Activated T-helper 2 cell treated with anti-CD3 and anti-CD28 coated beads, Interferon-gamma antibody, Interleukin-2, Interleukin-4, amounts not matched to agents 10 μg/mL and 5 μg/mL and 100 μg/mL, durations not matched to agents 14 hours and 24 hours and 36 hours (primary cell): ENCODE measurements at regions of chr6 and their contacts with region 1.

Region 1: GRCh38 chr6:26322645-26323482 is 42.1 kb upstream of the BTN3A2 start:
- DNase-seq: peak; percentile 60
- H3K4me3 Mint-ChIP-seq: peak overlapping the region; percentile 86
- H3K27ac Mint-ChIP-seq: peak overlapping the region; percentile 91
- H3K4me1 Mint-ChIP-seq: peaks cover 45% of the 10 kb centered on the region
- H3K27me3 Mint-ChIP-seq: peaks cover 3% of the 10 kb centered on the region

Region 2: DNA sequence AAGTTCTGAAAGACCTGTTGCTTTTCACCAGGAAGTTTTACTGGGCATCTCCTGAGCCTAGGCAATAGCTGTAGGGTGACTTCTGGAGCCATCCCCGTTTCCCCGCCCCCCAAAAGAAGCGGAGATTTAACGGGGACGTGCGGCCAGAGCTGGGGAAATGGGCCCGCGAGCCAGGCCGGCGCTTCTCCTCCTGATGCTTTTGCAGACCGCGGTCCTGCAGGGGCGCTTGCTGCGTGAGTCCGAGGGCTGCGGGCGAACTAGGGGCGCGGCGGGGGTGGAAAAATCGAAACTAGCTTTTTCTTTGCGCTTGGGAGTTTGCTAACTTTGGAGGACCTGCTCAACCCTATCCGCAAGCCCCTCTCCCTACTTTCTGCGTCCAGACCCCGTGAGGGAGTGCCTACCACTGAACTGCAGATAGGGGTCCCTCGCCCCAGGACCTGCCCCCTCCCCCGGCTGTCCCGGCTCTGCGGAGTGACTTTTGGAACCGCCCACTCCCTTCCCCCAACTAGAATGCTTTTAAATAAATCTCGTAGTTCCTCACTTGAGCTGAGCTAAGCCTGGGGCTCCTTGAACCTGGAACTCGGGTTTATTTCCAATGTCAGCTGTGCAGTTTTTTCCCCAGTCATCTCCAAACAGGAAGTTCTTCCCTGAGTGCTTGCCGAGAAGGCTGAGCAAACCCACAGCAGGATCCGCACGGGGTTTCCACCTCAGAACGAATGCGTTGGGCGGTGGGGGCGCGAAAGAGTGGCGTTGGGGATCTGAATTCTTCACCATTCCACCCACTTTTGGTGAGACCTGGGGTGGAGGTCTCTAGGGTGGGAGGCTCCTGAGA is 235.4 kb before region 1 on chr6 and contains the start of gene HFE:
- intact Hi-C with region 1: no loop called
- DNase-seq: peak; percentile 20
- H3K4me3 Mint-ChIP-seq: peak within 1 kb of the TSS; percentile 79
- H3K27ac Mint-ChIP-seq: peak within 1 kb of the TSS; percentile 12
- H3K4me1 Mint-ChIP-seq: peaks cover 31% of the 10 kb centered on the region
- H3K27me3 Mint-ChIP-seq: peaks cover 3% of the 10 kb centered on the region
- total RNA-seq, gene HFE: 0.32 and 0.39 TPM in 2 replicates

Region 3: DNA sequence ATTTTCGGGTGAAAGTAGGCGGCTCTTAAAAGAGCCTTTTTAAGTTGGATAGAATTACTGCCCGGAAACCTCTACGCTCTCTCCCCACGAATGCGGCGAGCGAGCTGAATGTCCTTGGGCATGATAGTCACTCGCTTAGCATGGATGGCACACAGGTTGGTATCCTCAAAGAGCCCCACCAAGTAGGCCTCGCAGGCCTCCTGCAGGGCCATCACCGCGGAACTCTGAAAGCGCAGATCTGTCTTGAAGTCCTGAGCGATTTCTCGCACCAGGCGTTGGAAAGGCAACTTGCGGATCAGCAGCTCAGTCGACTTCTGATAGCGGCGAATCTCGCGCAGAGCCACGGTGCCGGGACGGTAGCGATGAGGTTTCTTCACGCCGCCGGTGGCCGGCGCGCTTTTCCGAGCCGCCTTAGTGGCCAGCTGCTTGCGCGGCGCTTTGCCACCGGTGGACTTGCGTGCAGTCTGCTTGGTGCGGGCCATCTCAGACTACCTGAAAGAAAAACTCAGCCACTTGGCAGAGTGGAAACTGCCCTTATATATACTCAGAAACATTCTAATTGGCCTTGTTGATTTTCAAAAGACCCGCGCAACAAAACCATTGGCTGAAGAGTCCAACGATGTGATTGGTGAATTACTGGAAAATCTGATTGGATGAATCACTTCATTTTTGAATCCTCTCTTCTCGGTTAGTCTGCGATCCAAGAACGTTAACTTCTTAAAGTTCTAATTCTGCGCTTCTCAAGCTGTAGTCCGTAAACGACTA is 51.8 kb before region 1 on chr6:
- intact Hi-C with region 1: loop called (anchors 1 kb)
- DNase-seq: peak; percentile 79
- H3K4me3 Mint-ChIP-seq: no peak overlapping the region
- H3K27ac Mint-ChIP-seq: no peak overlapping the region
- H3K4me1 Mint-ChIP-seq: peaks cover 37% of the 10 kb centered on the region
- H3K27me3 Mint-ChIP-seq: no peaks in the 10 kb centered on the region

Region 4: DNA sequence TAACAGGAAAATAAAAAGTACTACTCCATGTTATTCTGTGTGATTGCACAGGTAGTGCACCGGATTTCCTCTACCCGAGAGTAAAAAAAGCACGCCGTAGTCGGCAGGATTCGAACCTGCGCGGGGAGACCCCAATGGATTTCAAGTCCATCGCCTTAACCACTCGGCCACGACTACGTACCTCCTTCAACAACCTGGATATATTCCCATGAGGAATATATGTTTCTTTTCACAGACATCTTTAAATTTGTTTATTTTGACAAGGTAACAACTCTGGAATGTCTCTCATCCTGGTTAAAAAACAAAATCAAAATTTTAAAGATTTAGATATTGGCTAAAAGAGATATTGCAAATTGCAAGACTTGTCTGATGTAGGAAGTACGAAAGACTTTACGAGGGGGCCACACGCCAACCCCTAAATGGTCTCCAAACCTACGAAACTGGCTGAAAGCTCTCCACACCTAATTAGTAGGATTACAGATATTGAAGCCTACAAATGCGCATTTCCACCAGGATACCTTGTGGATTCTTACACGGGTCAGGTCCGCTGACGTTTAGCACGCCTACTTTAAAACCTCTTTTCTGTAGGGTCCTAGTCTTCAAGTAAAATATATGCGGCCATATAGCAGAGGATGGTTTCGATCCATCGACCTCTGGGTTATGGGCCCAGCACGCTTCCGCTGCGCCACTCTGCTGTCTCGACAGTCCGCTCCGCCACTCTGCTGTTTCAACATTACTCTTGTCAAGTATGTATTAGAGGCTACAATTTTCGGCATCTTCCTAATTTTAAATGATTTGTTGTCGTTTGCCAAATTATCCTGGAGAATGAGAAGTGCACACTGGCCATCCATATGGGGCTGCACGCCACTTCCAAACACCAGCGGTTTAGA is 10.1 kb before region 1 on chr6:
- intact Hi-C with region 1: loop called (anchors 1 kb)
- DNase-seq: peak; percentile 79
- H3K4me3 Mint-ChIP-seq: peak overlapping the region; percentile 85
- H3K27ac Mint-ChIP-seq: peak overlapping the region; percentile 82
- H3K4me1 Mint-ChIP-seq: peaks cover 50% of the 10 kb centered on the region
- H3K27me3 Mint-ChIP-seq: no peaks in the 10 kb centered on the region

Region 5: DNA sequence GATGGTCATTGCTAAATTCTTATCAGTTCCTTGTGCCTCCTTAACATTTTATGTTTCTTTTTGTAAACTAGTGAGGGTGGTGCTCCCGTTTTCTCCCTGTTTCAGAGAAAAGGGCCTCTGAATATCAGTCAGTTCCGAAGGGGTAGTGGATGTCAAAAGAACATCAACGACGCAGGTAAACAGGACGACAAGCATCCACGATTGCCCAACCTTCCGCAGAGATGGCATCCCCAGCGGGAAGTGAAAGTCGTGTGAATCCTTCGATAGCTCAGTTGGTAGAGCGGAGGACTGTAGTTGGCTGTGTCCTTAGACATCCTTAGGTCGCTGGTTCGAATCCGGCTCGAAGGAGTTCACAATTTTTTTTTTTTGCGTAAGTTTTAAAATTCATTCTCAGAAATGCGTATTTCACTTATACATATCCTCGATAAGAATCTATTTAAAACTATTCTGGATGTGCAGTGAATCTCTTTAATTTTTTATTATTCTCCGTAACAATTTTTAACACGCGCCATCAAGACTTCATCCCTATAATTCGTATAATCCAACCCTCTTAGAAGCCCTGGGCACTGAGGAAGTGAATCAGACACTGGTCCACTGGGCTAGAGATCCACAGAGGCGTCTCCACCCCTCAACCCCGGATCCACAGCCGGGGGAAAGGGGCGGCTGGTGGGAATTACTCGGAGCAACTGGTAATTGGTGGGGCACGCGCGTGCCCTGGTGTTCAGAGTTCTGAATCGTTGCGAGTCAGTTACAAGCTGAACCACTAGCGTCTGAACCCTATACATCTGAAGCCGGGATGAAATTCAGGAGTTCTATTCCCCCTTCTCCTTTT is 246.0 kb after region 1 on chr6:
- intact Hi-C with region 1: loop called (anchors 1 kb)
- DNase-seq: peak; percentile 95
- H3K4me3 Mint-ChIP-seq: peak overlapping the region; percentile 93
- H3K27ac Mint-ChIP-seq: peak overlapping the region; percentile 78
- H3K4me1 Mint-ChIP-seq: peaks cover 32% of the 10 kb centered on the region
- H3K27me3 Mint-ChIP-seq: no peaks in the 10 kb centered on the region

Region 6: DNA sequence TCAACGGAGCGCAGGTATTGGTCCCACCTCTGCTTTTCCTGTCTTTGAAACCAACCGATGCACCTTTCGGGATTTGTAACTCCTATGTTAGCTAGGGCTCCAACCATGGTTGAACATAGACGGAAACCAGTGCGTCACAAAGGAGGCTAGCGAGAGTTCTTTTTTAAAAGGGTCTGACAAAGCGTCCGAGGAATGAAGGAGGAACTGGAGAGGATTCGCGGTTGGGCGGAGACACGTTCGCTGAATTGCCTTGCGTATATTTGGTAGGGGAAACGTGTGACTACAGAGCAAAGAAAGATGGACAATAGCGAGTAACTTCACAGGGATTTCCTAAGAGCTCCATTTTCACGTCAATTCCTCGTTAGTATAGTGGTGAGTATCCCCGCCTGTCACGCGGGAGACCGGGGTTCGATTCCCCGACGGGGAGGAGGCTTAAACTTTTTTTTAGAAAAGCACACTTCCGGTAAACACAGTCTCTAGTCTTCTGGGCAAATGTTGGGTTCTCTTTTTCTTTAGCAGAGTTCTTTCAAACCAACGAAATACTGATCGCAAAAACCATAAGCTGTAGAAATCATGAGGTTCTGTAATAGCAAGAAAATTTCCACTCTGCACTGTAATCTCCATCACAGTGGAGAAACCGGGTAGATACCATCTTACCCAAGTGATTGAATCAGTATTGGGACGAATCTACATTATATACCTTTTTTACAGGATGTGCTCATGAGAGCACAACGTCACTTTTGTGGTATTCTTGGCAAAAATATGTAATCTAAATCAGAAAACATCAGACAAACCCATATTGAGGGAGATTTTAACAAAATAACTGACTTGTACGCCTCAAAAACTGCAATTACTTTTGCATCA is 1156.7 kb after region 1 on chr6:
- intact Hi-C with region 1: loop called (anchors 5 kb)
- DNase-seq: peak; percentile 82
- H3K4me3 Mint-ChIP-seq: no peak overlapping the region
- H3K27ac Mint-ChIP-seq: no peak overlapping the region
- H3K4me1 Mint-ChIP-seq: peaks cover 3% of the 10 kb centered on the region
- H3K27me3 Mint-ChIP-seq: peaks cover 12% of the 10 kb centered on the region